ENCODE measurements at regions of chr1 and their contacts with region 1.

Region 1: DNA sequence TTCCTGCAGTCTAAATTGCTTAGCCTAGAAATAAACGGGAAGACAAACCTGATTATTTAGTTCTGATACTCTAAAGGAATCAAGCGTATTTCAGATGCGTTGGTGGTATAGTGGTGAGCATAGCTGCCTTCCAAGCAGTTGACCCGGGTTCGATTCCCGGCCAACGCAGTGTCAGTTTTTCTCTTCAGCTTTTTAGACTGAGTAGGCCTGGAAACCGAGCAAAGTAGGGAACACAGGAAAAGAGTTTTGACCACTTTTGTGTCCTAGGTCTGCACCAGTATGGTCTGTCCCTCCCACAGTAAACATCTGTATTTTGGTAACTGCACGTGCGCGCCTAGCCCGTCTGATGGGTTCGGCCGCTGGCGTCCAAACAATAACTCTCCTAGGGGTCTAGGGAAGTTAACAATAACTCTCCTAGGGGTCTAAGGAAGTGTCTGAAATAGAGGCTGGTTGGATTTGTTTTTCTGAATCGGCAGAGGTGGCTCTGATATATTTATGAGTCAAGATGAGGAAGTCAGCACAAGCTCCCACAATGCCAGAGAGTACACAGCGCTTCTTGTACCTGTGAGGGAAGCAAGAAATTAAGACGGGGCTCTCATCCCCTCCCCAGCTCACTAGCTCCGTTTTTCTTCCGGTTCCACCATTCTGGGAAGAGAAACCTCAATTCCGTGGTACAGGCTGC is 15.6 kb upstream of the HJV start:
- DNase-seq: peak; percentile 91
- ATAC-seq: peak; percentile 49
- H3K4me3 Mint-ChIP-seq: peak overlapping the region; percentile 88
- H3K27ac Mint-ChIP-seq: peak overlapping the region; percentile 97
- H3K4me1 Mint-ChIP-seq: peaks cover 33% of the 10 kb centered on the region
- H3K27me3 Mint-ChIP-seq: peaks cover 11% of the 10 kb centered on the region

Region 2: DNA sequence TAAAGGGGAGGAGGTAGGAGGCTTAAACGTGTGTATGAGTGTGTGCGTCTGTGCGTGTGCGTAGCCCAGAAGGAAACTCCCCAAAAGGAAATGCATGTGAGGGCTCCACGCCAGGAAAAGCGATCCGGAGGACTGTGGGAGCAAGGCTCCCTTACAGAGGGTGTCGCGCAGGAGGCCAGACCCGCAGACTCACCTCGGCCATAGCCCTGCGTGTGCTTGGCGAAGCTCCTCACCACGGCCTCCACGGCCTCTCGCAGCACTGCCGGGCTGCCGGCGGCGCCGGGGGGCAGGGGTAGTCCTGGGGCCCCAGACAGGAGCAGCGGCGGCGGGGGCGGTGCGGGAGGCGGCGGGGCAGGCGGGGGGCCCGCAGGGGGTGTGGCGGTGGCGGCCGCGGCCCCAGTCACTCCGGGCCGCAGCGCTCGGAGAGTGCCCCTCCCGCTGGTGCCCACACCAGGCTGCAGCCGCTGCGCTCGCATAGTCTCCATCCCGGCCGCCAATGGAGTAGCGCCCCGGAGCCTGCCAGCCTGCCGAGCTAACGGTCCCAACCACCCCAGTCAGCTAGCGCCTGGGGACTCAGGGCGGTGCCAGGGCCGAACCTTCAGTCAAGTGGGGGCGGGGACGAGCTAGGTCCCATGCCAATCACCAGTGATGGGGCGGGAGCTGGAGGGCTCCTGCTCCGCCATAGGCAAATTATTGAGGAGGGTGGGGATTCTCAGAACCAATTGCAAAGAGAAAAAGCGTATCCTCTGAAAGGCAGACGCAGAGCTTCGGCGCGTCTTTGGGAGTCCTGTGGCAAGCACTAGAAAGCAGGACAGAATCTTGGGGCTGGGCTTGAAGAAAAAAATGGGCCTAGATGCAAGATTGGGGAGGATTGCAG is 79.4 kb before region 1 on chr1 and contains the start of gene LIX1L:
- CTCF ChIA-PET with region 1: interaction called, 13 read pairs
- DNase-seq: peak; percentile 98
- ATAC-seq: peak; percentile 90
- H3K4me3 Mint-ChIP-seq: peak within 1 kb of the TSS; percentile 91
- H3K27ac Mint-ChIP-seq: peak within 1 kb of the TSS; percentile 86
- H3K4me1 Mint-ChIP-seq: peaks cover 68% of the 10 kb centered on the region
- H3K27me3 Mint-ChIP-seq: no peaks in the 10 kb centered on the region
- total RNA-seq, gene LIX1L: 35.0 to 36.2 TPM

Region 3: DNA sequence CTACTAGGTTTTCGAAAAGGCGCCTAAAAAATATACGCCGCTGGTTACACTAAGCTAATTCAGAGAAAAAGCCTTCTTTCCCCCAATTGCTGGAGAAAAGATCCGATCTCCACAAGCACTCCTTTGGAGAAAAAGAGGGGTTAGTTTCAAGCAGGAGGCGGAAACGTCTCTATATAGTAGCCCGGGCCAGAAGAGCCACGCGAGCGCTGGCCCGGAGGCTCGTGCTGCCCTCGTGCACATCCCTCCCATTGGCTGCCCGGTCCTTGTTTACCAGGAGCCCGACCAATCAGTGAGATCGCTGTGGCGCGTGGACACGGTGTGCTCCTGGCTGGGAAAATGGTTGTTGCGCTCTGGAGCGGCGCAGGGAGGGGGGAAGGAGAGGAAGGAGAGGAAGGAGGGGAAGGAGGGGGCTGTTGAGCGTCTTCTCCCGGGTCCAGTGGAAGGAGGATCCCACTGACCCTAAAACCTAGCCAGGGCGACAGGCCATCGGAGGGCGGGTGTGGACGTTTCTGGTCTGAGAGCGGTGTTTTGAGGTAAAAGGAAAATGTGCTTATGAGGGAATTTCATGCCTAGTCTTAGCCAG is 40.6 kb before region 1 on chr1 and contains the start of gene TXNIP:
- CTCF ChIA-PET with region 1: interaction called, 21 read pairs
- DNase-seq: peak; percentile 98
- ATAC-seq: peak; percentile 95
- H3K4me3 Mint-ChIP-seq: peak within 1 kb of the TSS; percentile 99
- H3K27ac Mint-ChIP-seq: peak within 1 kb of the TSS; percentile 94
- H3K4me1 Mint-ChIP-seq: peaks cover 62% of the 10 kb centered on the region
- H3K27me3 Mint-ChIP-seq: no peaks in the 10 kb centered on the region
- total RNA-seq, gene TXNIP: 127 to 207 TPM

Region 4: GRCh38 chr1:146019231-146020057 is 17.7 kb before region 1 on chr1:
- CTCF ChIA-PET with region 1: interaction called, 20 read pairs
- DNase-seq: no peak
- ATAC-seq: peak; percentile 53
- H3K4me3 Mint-ChIP-seq: no peak overlapping the region
- H3K27ac Mint-ChIP-seq: no peak overlapping the region
- H3K4me1 Mint-ChIP-seq: peaks cover 4% of the 10 kb centered on the region
- H3K27me3 Mint-ChIP-seq: peaks cover 78% of the 10 kb centered on the region

Region 5: GRCh38 chr1:146049436-146049835 is 12.3 kb after region 1 on chr1:
- CTCF ChIA-PET with region 1: interaction called, 28 read pairs
- DNase-seq: no peak
- ATAC-seq: no peak
- H3K4me3 Mint-ChIP-seq: peak overlapping the region; percentile 35
- H3K27ac Mint-ChIP-seq: no peak overlapping the region
- H3K4me1 Mint-ChIP-seq: peaks cover 35% of the 10 kb centered on the region
- H3K27me3 Mint-ChIP-seq: peaks cover 4% of the 10 kb centered on the region